ENCODE measurements at regions of chr6 and their contacts with region 1.

Region 1: GRCh38 chr6:159679091-159680077 is 13.7 kb downstream of the SOD2 start:
- DNase-seq: no peak
- H3K4me3 ChIP-seq: no peak overlapping the region
- H3K27ac ChIP-seq: peak overlapping the region; percentile 20
- H3K4me1 ChIP-seq: peaks cover 3% of the 10 kb centered on the region
- H3K27me3 ChIP-seq: no peaks in the 10 kb centered on the region
- CTCF ChIP-seq: no peak

Region 2: GRCh38 chr6:159565181-159565710 is 114.1 kb before region 1 on chr6:
- intact Hi-C with region 1: no loop called
- DNase-seq: no peak
- H3K4me3 ChIP-seq: no peak overlapping the region
- H3K27ac ChIP-seq: no peak overlapping the region
- H3K4me1 ChIP-seq: no peaks in the 10 kb centered on the region
- H3K27me3 ChIP-seq: no peaks in the 10 kb centered on the region
- CTCF ChIP-seq: no peak

Region 3: GRCh38 chr6:159852877-159853276 is 173.5 kb after region 1 on chr6:
- intact Hi-C with region 1: loop called (anchors 10 kb)
- DNase-seq: no peak
- H3K4me3 ChIP-seq: no peak overlapping the region
- H3K27ac ChIP-seq: no peak overlapping the region
- H3K4me1 ChIP-seq: no peaks in the 10 kb centered on the region
- H3K27me3 ChIP-seq: no peaks in the 10 kb centered on the region
- CTCF ChIP-seq: peak; percentile 10